Posterior cingulate gyrus (tissue), 11 donors: ENCODE measurements at regions of chr12 and their contacts with region 1.

Region 1: DNA sequence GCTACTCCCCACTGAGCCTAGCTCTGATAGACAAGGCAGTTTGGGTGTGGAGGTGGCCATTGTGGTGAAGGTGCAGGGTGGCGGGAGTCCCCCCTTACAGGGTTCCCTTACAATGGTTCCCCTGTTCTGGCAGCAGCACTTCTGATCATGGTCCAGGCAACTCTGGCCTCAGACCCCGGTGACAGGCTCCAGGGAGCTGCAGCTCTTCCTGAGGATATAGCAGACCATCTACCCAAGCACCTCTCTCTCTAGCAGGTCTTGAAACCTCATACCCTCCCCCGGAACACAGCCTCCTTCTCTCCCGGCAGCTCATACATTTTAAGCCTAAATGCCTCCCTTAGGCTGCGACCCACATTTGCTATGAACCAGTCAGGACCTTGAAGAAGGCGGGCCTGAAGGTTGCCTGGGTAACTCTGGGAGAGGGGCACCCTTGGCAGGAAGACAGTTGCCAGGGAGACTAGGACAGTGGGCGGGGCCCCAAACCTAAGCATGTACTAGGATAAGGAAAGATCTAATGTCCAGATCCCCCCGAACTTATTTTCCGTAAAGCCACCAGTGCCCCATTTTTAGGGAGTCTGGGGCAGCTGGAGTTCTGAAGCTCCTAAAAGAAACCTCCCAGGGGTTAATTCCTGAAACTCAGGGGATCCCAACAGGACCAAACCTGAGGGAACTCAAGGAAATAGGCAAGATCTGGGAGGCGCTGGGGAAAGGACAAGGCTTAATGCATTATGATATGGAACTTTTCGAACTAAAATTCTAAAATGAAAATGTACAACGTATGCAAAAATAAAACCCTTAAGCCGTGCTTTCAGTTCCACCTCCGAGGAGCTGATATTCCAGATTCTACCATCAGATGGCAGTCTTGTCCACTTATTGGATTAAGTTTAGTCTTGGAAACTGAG is 4.5 kb upstream of the GDF11 start:
- DNase-seq: peak in 9 of 10 donors; percentile 58 to 95 (median 80)

Region 2: GRCh38 chr12:55024565-55024964 is 713.8 kb before region 1 on chr12:
- intact Hi-C with region 1: no loop called
- DNase-seq: no peak

Region 3: DNA sequence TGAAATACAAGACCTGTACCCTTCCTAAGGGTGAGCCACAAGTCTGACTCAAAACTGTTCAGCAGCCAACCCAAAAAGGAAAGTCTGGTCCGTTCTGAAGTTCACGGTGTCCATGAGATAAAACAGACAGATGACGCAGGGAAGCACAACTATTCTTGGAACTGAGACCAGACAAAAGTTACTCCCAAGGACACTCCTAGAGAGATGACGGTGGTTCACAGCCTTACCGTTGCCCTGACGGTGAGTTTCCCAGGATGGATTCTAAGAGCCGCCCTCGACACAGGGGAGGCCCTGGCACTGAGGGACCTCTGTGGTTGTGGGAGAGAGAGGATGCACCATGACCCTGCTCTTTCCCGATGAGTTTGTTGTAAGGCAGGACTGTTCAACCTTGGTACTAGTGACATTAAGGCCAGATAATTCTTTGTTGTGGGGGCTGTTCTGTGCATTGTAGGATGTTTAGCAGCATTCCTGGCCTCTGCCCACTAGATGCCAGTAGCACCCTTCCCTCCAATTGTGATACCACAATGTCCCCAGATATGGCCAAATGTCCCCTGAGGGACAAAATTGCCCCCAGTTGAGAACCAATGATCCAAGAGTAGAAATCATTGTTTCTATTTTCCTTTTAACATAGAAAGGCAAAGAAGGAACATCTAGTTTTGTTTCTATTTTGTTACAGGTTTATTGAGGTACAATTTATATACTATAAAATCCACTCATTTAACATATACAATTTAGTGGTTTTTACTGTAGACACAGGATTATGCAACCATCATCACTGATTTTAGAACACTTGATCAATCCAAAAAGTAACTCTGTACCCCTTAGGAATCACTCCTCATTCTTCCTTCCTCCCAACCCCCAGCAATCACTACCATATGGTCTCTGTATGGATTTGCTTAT is 78.6 kb before region 1 on chr12:
- intact Hi-C with region 1: loop called (anchors 2 kb)
- DNase-seq: no peak

Region 4: DNA sequence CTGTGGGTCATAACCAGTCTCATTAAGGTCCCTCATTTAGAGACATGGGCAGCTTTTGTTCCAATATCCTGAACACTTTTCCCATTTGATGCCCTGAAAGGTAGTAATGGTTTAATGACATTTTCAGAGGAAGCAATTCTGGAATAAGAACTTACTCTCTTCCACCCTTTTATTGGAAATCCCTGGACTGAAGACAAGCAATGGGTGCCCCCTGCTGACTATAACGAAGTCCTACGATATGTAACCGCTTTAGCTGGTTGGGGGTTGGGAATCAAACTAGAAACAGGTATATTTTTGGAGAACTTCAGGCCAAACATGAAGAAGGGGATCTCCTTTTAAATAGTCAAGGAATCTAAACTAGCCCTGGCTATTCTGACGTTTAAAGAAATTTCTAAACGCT is 58.7 kb after region 1 on chr12:
- intact Hi-C with region 1: loop called (anchors 2 kb)
- DNase-seq: peak in 3 of 10 donors; percentile 15 to 41 (median 27)

Region 5: DNA sequence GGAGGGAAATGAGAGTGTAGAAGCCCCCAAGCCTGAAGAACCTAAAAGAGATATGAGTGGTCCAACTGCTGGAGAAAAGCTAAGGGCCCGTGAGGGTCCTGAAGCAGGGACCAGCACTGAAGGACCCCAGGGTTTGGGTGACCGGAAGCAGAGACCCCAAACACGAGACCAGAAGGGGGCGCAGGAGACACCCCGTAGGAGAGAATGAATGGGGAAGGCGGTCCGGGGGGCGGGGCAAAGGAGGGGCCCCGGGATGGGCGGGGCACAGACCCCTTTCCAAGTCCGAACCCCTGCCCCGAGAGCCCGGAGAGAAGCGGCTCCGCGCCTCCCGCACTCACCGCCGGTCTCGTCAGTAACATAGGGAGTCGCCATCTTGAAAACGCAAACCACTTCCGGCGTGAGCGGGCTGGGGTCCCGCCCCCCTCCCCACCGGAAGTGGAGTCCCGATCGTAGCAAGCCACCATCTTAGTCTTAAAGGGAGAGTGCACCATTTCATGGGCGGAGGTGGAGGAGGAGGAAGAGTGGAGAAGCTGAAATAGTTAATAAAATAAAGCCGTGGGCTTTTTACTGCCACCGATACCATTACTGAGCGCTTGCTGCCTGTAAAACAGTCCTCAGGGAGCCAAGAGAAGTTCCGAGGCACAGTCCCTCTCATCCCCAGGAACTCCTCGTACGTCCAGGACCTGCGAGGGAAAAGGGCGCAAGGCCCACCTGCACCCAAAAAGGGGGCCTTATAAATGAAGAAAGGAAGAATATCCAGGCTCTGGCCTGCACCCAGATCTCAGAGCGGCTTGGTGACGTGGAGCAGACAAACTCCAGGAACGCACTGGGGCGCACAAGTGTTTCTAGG is 188.6 kb after region 1 on chr12:
- intact Hi-C with region 1: loop called (anchors 5 kb)
- DNase-seq: peak; percentile 77 to 97 (median 84)

Region 6: GRCh38 chr12:55940065-55940732 is 201.8 kb after region 1 on chr12:
- intact Hi-C with region 1: loop called (anchors 1 kb)
- DNase-seq: peak; percentile 66 to 96 (median 86)

Region 7: DNA sequence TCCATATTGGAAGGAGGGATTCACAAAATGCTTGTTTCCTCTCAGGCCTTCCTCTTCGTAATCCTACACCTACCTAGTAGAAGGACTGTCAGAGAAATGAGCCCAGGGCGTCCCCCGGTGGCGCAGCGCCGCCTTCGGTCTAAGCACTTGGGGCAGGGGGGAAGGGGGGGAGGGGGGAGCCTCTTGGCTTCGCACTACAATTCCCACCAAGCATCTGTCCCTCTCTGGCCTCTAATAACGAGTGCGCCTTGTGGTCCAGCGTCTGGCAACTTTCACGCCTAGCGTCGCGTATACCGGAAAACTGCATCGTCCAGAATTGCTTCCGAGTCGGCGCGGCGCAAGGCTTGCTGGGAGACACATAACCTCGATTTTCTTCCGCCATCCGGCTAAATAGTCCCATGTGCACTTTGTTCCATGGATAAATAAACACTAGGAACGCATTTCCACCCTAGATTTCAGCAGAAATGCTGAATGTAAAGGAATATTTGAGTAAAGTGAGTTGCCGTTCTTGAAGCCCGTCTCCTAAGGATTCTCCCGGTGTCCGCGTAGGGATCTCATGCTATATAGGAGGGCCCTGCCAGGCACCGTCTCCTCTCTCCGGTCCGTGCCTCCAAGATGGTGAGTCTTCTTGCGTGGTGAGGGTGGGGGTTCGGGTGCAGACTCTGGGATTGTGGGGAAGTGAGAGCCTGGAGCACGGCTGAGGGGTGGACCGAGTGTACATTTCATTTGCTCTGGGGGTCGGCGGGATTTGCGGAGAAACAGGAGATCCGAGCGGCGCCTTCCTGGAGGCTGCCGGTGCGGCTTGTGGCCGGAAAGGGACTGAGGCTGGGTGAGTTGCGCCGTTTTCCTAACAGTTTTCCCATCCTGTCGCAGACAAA is 303.4 kb after region 1 on chr12 and contains the start of gene RPS26:
- intact Hi-C with region 1: loop called (anchors 2 kb)
- DNase-seq: peak; percentile 80 to 98 (median 90)